ENCODE measurements at regions of chr14 and their contacts with region 1.

Region 1: DNA sequence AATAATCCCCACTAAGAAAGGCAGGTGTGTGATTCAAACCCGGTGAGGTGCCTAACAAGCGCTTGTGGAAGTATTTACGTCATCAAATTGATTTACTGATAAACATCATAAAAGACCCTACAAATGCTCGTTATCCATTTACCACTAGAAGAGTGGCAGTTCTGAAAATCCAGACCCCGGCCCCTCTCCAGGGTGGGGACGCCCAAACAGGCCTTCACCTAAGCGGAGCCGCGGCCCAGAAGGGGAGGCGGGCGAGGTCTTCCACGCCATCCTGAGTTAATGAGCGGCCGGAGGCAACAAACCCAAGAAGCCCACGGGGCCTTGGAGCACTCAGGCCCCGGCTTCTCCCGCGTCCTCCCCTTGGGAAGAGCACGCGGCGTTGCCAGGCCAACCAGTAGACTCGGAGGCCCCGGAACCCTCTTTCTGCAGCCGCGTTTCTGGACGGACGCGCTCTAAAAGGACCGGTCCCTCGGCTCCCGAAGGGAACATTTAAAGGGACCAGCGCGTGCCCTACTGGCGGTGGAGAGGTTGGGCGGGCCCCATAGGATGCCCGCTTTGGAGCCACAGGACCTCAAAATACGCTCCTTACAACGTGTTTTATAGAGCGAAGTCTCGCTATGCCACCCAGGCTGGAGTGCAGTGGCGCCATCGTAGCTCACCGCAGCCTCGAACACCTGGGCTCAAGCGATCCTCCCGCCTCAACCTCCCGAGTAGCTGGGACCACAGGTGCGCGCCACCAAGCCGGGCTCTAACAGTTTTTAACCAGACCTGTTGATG is 3.5 kb downstream of the PTPN21 start:
- DNase-seq: peak; percentile 19 to 82
- H3K4me3 ChIP-seq: peak overlapping the region; percentile 72 to 94
- H3K27ac ChIP-seq: peak overlapping the region; percentile 55 to 66
- H3K4me1 ChIP-seq: peaks cover 9 to 21% of the 10 kb centered on the region in 2 donors
- H3K27me3 ChIP-seq: no peaks in the 10 kb centered on the region
- CTCF ChIP-seq: peak; percentile 31 to 47 (median 35)

Region 2: GRCh38 chr14:87992718-87993628 is 558.3 kb before region 1 on chr14 and contains the start of gene GALC:
- intact Hi-C with region 1: loop called (anchors 2 kb)
- DNase-seq: peak; percentile 90 to 98
- H3K4me3 ChIP-seq: peak within 1 kb of the TSS; percentile 93 to 95
- H3K27ac ChIP-seq: peak within 1 kb of the TSS; percentile 95 to 96
- H3K4me1 ChIP-seq: peaks cover 0 to 16% of the 10 kb centered on the region in 2 donors
- H3K27me3 ChIP-seq: no peaks in the 10 kb centered on the region
- CTCF ChIP-seq: no peak
- total RNA-seq, gene GALC: 31.7 TPM

Region 3: DNA sequence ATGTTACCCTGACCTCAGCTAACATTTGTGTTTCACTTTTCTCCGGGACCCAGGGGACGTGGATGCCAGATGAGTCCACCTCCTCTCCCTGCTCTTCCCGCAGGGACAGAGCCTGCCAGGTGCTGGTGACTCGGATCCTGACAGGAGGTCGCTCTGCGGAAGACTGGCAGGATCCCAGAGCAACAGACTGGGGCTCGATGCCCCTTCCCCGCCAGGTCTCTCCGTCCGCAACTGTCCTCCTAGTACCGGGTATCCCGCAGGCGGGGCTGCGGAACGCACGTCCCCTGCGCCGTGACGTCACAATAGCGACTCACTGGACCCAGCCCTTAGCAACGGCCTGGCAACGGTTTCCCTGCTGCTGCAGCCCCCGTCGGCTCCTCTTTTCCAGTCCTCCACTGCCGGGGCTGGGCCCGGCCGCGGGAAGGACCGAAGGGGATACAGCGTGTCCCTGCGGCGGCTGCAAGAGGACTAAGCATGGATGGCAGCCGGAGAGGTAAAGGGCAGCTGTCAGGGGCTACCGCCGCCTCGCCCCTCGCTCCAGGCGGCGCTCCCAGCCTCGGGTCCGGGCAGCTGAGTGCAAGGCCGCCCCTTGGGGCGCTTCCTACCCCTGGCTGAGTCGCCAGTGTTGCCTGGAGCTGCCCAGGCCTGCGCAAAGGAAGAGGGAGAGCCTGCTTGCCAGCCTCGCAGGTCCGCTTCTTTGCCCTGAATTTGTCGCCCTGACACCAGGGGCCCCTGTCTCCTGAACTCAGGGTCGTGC is 165.8 kb before region 1 on chr14 and contains the start of gene SPATA7:
- intact Hi-C with region 1: loop called (anchors 5 kb)
- DNase-seq: peak; percentile 64 to 95
- H3K4me3 ChIP-seq: peak within 1 kb of the TSS; percentile 90 to 97
- H3K27ac ChIP-seq: peak within 1 kb of the TSS; percentile 70 to 82
- H3K4me1 ChIP-seq: peaks cover 4 to 12% of the 10 kb centered on the region in 2 donors
- H3K27me3 ChIP-seq: no peaks in the 10 kb centered on the region
- CTCF ChIP-seq: no peak
- total RNA-seq, gene SPATA7: 1.6 TPM

Region 4: GRCh38 chr14:88492272-88493089 is 58.8 kb before region 1 on chr14:
- intact Hi-C with region 1: loop called (anchors 2 kb)
- DNase-seq: peak in 1 of 2 donors; percentile 83
- H3K4me3 ChIP-seq: no peak overlapping the region
- H3K27ac ChIP-seq: no peak overlapping the region
- H3K4me1 ChIP-seq: no peaks in the 10 kb centered on the region
- H3K27me3 ChIP-seq: no peaks in the 10 kb centered on the region
- CTCF ChIP-seq: peak; percentile 80 to 87 (median 84)

Region 5: DNA sequence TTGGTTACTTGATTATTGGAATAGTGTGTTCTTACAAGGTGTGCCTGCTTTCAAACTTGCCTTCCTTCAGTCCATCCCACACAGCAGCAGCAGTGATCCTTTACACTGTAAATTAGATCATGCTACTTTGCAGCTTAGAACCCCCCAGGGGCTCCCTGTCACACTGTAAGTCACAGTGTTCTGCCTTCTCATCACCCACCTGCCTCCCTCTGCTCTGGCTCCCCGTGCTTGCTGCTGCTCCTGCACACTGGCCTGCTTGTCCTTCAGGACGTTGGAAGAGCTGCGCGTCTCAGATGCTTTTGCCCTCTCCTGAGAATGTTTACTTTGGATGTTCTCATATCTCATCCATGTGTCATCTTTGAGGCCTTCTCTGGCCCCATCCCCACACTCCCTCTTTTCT is 38.9 kb after region 1 on chr14:
- intact Hi-C with region 1: no loop called
- DNase-seq: no peak
- H3K4me3 ChIP-seq: no peak overlapping the region
- H3K27ac ChIP-seq: no peak overlapping the region
- H3K4me1 ChIP-seq: no peaks in the 10 kb centered on the region
- H3K27me3 ChIP-seq: no peaks in the 10 kb centered on the region
- CTCF ChIP-seq: no peak

Region 6: GRCh38 chr14:88831284-88831683 is 280.0 kb after region 1 on chr14:
- intact Hi-C with region 1: loop called (anchors 5 kb)
- DNase-seq: peak in 1 of 2 donors; percentile 77
- H3K4me3 ChIP-seq: no peak overlapping the region
- H3K27ac ChIP-seq: peak overlapping the region; percentile 56 to 81
- H3K4me1 ChIP-seq: peaks cover 8 to 22% of the 10 kb centered on the region in 2 donors
- H3K27me3 ChIP-seq: no peaks in the 10 kb centered on the region
- CTCF ChIP-seq: no peak

Region 7: DNA sequence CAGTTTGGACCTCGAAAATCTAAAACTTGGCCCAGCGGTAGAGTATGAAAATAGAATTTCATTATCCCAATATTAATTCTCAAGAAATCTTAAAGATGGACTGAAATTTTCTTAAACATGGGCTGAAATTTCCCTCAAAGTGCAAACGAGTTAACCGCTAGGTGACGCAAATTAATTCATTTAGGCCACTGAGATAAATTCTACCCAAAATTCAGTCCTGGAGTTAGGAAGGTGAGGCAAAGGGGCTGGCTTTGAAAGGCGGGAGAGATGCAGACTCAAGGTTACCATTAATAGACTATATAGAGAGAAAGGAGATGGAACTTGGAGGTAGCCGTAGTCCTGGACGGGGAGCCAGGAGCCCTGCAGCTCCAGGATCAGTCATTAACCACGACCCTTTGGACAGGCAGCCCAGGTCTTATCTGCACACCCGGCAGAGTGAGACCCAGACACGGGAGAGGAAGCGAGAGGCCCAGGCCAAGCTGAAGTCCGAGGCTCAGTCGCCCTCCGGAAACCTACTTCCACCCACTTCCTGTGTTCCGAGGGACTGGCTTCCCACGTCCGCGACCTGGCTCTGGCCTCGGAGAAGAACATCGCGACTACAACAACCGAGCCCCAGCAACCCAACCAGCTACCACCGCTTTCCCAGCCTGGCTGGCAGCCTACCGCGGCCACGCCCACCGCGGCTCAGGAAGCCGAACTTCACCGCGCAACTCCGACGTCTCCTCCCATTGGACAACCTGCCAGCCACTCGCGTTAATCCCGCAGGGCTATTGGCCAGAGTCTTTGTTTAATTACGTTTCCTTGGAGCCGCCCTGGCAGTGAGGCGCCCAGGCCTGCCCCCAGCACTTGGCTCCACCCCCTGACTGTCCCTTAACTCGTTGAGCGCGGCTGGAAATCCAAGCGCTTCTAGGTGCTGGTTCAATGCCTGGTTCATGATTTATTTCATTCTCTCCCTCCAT is 1403.1 kb after region 1 on chr14 and contains the start of gene EFCAB11:
- intact Hi-C with region 1: loop called (anchors 5 kb)
- DNase-seq: peak; percentile 87 to 98
- H3K4me3 ChIP-seq: peak within 1 kb of the TSS; percentile 82 to 83
- H3K27ac ChIP-seq: peak within 1 kb of the TSS; percentile 91 to 94
- H3K4me1 ChIP-seq: peaks cover 4 to 11% of the 10 kb centered on the region in 2 donors
- H3K27me3 ChIP-seq: no peaks in the 10 kb centered on the region
- CTCF ChIP-seq: no peak
- total RNA-seq, gene EFCAB11: not detected

Region 8: GRCh38 chr14:90256354-90257131 is 1705.3 kb after region 1 on chr14 and contains the start of gene PSMC1:
- intact Hi-C with region 1: loop called (anchors 10 kb)
- DNase-seq: peak; percentile 63 to 95
- H3K4me3 ChIP-seq: peak within 1 kb of the TSS; percentile 92 to 99
- H3K27ac ChIP-seq: peak within 1 kb of the TSS; percentile 90 to 93
- H3K4me1 ChIP-seq: peaks cover 0 to 4% of the 10 kb centered on the region in 2 donors
- H3K27me3 ChIP-seq: no peaks in the 10 kb centered on the region
- CTCF ChIP-seq: peak in 1 of 3 experiments; percentile 2
- total RNA-seq, gene PSMC1: 93.2 TPM